Mucosa of descending colon (tissue), 3 donors: ENCODE measurements at regions of chr5 and their contacts with region 1.

Region 1: GRCh38 chr5:146409054-146409671 is 38.0 kb upstream of the TCERG1 start:
- DNase-seq: no peak
- ATAC-seq: no peak
- H3K4me3 ChIP-seq: no peak overlapping the region
- H3K4me1 ChIP-seq: no peaks in the 10 kb centered on the region
- CTCF ChIP-seq: no peak

Region 2: GRCh38 chr5:146291421-146292074 is 117.6 kb before region 1 on chr5:
- intact Hi-C with region 1: loop called in 1 of 2 experiments (anchors 10 kb)
- DNase-seq: peak in 1 of 3 donors; percentile 6
- ATAC-seq: peak; percentile 34
- H3K4me3 ChIP-seq: no peak overlapping the region
- H3K4me1 ChIP-seq: no peaks in the 10 kb centered on the region
- CTCF ChIP-seq: no peak

Region 3: GRCh38 chr5:146446853-146447733 is 37.9 kb after region 1 on chr5 and contains the start of gene TCERG1:
- intact Hi-C with region 1: no loop called
- DNase-seq: peak; percentile 98 to 99 (median 99)
- ATAC-seq: peak; percentile 93
- H3K4me3 ChIP-seq: peak within 1 kb of the TSS; percentile 99
- H3K4me1 ChIP-seq: peaks cover 34% of the 10 kb centered on the region
- CTCF ChIP-seq: peak; percentile 80
- total RNA-seq, gene TCERG1: 44.3 to 63.8 (median 55.4) TPM